ENCODE measurements at regions of chr22 and their contacts with region 1.

Region 1: DNA sequence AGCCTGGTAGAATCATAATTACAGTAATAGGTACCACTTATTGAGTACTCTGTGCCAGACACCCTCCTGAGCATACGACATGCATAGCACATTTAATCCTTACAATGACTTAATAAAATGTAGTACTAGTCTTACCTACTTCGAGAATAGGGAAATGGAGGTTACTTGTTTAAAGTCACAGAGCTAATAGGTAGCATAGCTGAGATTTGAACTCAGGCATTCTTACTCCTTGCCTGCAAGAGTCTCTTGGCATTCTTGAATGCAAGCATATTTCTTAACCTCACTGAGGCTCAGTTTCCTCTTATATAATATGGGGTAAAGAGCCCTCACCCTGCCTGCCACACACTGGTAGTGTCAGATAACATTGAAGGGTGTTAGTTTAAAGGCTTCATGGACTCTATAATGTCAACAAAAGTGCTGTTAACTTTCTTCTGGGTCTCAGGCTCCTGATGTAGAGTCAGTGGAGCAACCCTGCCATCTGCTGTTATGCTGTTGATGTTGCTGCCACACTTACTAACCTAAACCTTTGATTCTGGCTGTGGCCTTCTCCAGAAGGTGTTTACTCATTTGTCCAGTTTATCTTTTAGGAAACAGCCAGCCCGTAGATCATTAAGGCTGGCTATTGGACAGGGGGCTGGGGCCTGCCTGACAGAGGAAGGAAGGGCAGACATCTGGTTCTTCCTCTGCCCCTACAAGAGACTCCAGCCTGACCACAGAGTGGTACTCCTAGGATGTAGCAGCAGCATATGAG is 18.9 kb downstream of the LIMK2 start:
- DNase-seq: peak in 1 of 2 donors; percentile 57
- ATAC-seq: peak; percentile 65 to 84 (median 78)
- H3K4me3 ChIP-seq: no peak overlapping the region
- H3K27ac ChIP-seq: peak overlapping the region in 9 of 10 donors; percentile 71 to 94 (median 77)
- H3K4me1 ChIP-seq: peaks cover 7 to 100% (median 56%) of the 10 kb centered on the region in 9 donors
- H3K27me3 ChIP-seq: no peaks in the 10 kb centered on the region
- CTCF ChIP-seq: peak; percentile 44 to 85 (median 74)

Region 2: DNA sequence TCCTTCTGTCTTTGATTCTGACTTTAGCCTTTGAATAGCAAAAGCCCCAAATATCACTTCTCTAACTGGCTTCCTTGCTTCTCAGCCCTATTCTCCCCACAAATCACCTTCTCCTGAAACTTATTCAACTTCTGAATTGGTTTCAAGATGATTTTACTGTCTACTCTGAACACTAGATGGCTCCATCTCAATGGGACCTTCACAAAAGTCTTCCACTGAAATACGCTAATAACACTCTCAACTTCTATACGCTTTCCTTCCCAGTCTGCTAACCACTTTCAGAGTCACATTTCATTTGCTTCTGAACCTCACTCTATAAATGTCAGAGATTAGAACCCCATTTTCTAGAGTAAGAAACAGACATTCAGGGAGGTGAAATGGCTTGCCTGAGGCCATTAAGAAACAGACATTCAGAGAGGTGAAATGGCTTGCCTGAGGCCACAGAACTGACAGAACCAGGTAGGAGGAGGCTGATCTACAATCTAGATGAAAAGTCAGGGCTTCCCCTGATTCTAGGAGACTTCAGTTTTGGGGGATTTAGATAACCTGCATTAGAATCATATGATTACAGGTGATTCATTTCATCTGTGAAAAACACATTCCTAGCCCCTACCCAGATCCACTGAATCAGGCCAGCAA is 283.1 kb before region 1 on chr22:
- intact Hi-C with region 1: loop called in 5 of 10 experiments (anchors 5 to 10 kb)
- DNase-seq: peak in 1 of 2 donors; percentile 20
- ATAC-seq: peak in 7 of 8 donors; percentile 65 to 87 (median 77)
- H3K4me3 ChIP-seq: no peak overlapping the region
- H3K27ac ChIP-seq: peak overlapping the region in 8 of 10 donors; percentile 28 to 71 (median 56)
- H3K4me1 ChIP-seq: peaks cover 5 to 30% (median 21%) of the 10 kb centered on the region in 9 donors
- H3K27me3 ChIP-seq: no peaks in the 10 kb centered on the region
- CTCF ChIP-seq: peak; percentile 39 to 82 (median 67)

Region 3: GRCh38 chr22:31107178-31107893 is 123.7 kb before region 1 on chr22 and contains the start of gene SELENOM:
- intact Hi-C with region 1: loop called in 1 of 10 experiments (anchors 10 kb)
- DNase-seq: peak; percentile 97 to 98
- ATAC-seq: peak; percentile 92 to 96 (median 94)
- H3K4me3 ChIP-seq: peak within 1 kb of the TSS; percentile 54 to 90 (median 80)
- H3K27ac ChIP-seq: peak within 1 kb of the TSS; percentile 55 to 96 (median 94)
- H3K4me1 ChIP-seq: peaks cover 0 to 45% (median 24%) of the 10 kb centered on the region in 9 donors
- H3K27me3 ChIP-seq: no peaks in the 10 kb centered on the region
- CTCF ChIP-seq: peak; percentile 91 to 99 (median 93)
- total RNA-seq, gene SELENOM: 21.5 to 73.9 (median 45.3) TPM

Region 4: GRCh38 chr22:31278622-31279326 is 47.7 kb after region 1 on chr22:
- intact Hi-C with region 1: no loop called
- DNase-seq: no peak
- ATAC-seq: peak in 1 of 8 donors; percentile 21
- H3K4me3 ChIP-seq: no peak overlapping the region
- H3K27ac ChIP-seq: peak overlapping the region in 3 of 10 donors; percentile 4 to 79 (median 21)
- H3K4me1 ChIP-seq: peaks cover 0 to 12% (median 0%) of the 10 kb centered on the region in 9 donors
- H3K27me3 ChIP-seq: no peaks in the 10 kb centered on the region
- CTCF ChIP-seq: no peak

Region 5: GRCh38 chr22:31345331-31346254 is 114.5 kb after region 1 on chr22:
- intact Hi-C with region 1: no loop called
- DNase-seq: peak; percentile 83 to 89
- ATAC-seq: peak; percentile 52 to 75 (median 67)
- H3K4me3 ChIP-seq: peak overlapping the region; percentile 47 to 91 (median 74)
- H3K27ac ChIP-seq: peak overlapping the region; percentile 87 to 97 (median 92)
- H3K4me1 ChIP-seq: peaks cover 20 to 62% (median 44%) of the 10 kb centered on the region in 9 donors
- H3K27me3 ChIP-seq: no peaks in the 10 kb centered on the region
- CTCF ChIP-seq: peak; percentile 68 to 91 (median 81)

Measured in heart right ventricle (tissue), 16 donors.